ENCODE measurements at regions of chr2 and their contacts with region 1.

Region 1: GRCh38 chr2:35891936-35892335 is 463.6 kb upstream of the CRIM1 start:
- DNase-seq: no peak

Region 2: GRCh38 chr2:35864141-35864540 is 27.8 kb before region 1 on chr2:
- intact Hi-C with region 1: loop called in 1 of 2 experiments (anchors 2 kb)
- DNase-seq: no peak